GM12878 (cell line): ENCODE measurements at regions of chr18 and their contacts with region 1.

Region 1: GRCh38 chr18:76169733-76170132 is 325.3 kb downstream of the ZNF516 start:
- DNase-seq: no peak
- ATAC-seq: peak; percentile 56
- H3K4me3 ChIP-seq: no peak overlapping the region
- H3K27ac ChIP-seq: no peak overlapping the region
- H3K4me1 ChIP-seq: no peaks in the 10 kb centered on the region
- H3K27me3 ChIP-seq: no peaks in the 10 kb centered on the region; a peak in 1 of 4 replicates
- CTCF ChIP-seq: peak; percentile 40 to 58 (median 58)
- EP300 ChIP-seq: no peak
- POLR2A ChIP-seq: no peak
- RAD21 ChIP-seq: 0 out of 2 replicates have a peak, but pooled peaks have one; percentile 18

Region 2: DNA sequence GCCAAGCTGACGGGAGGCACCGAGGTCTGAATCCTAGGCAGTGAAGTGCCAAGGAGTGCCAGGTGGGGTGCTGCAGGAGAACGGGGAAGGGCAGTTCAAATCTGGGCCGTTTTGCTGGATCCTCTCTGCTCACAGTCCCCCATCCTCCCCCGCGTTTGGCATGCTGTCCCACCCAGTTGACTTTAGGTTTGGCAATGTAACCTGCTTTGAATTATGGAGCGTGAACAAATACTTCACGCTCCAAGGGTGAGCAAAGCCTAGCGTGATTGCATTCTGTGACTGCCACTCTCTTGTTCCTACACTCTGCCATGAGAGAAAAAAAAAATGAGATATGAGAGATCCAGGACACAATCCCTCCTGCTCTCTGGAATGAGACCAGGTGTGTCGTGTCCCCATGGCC is 56.6 kb before region 1 on chr18:
- CTCF ChIA-PET with region 1: no interaction called
- POLR2A ChIA-PET with region 1: no interaction called
- RAD21 ChIA-PET with region 1: no interaction called
- SMC1A ChIA-PET with region 1: no interaction called
- in situ Hi-C with region 1: no loop called
- intact Hi-C with region 1: no loop called
- DNase-seq: no peak
- ATAC-seq: no peak
- H3K4me3 ChIP-seq: no peak overlapping the region
- H3K27ac ChIP-seq: no peak overlapping the region
- H3K4me1 ChIP-seq: no peaks in the 10 kb centered on the region
- H3K27me3 ChIP-seq: no peaks in the 10 kb centered on the region; a peak in 1 of 4 replicates
- CTCF ChIP-seq: no peak
- EP300 ChIP-seq: no peak
- POLR2A ChIP-seq: no peak
- RAD21 ChIP-seq: no peak

Region 3: DNA sequence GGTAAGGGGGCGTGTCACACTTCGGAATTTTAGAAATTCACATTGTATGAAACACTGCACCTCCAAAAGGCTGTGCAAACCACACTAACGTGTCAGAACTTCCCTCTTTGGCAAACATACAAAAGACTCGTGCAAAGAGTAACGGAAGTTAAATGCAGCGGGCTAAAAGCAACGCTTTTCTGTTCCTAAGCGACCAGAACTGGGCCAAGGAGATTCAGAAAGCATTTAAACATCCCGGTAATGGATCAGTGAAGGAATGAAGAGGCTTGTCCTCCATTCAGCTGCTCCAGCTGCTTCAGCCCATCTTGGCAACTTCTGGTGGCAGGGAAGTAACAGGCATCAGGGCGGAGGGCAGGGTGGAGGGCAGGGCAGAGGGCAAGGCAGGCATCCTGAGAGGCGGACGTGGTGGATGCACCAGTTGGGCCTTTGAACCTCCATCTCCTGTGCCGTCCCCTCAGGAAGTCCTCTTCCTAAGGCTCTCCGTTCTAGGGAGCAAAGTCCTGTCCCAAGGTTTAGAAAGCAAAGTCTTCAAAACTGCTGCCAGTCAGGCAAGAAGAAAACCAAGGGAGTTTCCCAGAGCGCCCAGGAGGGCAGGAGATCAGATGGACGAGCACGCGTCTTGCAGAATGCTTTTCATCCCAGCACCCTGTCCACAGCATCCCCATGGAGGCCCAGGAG is 94.6 kb after region 1 on chr18:
- CTCF ChIA-PET with region 1: interaction called, 3 read pairs
- POLR2A ChIA-PET with region 1: no interaction called
- RAD21 ChIA-PET with region 1: no interaction called
- SMC1A ChIA-PET with region 1: no interaction called
- in situ Hi-C with region 1: no loop called
- intact Hi-C with region 1: loop called (anchors 5 kb)
- DNase-seq: no peak
- ATAC-seq: no peak
- H3K4me3 ChIP-seq: no peak overlapping the region
- H3K27ac ChIP-seq: no peak overlapping the region
- H3K4me1 ChIP-seq: no peaks in the 10 kb centered on the region
- H3K27me3 ChIP-seq: peaks cover 2 to 6% of the 10 kb centered on the region in 2 experiments; a peak in 2 of 4 replicates
- CTCF ChIP-seq: no peak
- EP300 ChIP-seq: no peak
- POLR2A ChIP-seq: no peak
- RAD21 ChIP-seq: no peak

Region 4: DNA sequence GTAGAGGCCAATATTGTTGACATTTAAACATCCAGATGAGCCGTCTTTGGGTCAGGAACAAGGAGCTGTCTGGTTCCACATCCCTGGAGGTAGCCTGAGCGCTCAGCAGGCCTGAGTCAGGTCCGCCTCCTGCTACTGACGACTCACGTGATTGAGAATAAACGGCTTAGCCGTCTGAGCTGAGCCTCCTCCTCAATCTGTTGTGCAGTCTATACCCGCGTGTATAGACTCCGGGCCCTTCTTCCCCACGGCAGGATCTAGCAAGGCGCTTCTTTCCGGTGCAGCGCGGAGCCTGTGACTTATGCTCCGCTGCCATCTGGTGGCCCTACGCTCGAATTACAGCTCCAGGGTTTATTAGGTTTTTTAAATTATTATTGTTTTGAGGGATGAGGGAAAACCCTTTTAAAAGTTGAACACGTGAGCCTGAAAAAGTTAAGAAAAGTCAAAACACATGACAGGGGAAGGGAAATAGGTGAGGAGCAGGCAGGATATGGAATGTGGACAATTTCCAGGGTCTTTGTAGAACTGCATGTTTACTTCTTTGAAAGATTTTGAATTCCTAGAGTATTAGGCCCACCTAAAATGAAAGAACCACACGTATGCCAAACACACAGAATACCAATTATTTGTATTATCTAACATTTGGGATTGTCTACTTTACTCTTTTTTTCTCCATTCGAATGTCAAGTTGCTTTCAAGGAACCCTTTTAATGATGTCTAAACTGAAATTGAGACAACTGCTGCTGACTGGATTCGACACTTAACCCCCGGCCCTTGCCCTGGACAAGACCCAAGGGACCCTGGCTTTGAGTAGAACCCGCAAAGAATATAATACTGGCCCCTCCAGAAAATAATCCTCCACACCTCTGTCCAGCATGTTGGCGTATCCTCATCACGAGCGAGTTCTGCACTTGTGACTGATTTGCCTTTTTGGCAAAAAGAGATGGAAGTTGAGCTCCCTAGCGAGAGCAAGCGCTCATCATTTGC is 540.2 kb after region 1 on chr18:
- CTCF ChIA-PET with region 1: interaction called, 15 read pairs
- POLR2A ChIA-PET with region 1: no interaction called
- RAD21 ChIA-PET with region 1: no interaction called
- SMC1A ChIA-PET with region 1: interaction called, 4 read pairs
- in situ Hi-C with region 1: no loop called
- intact Hi-C with region 1: no loop called
- DNase-seq: peak; percentile 12
- ATAC-seq: peak; percentile 93
- H3K4me3 ChIP-seq: no peak overlapping the region
- H3K27ac ChIP-seq: no peak overlapping the region
- H3K4me1 ChIP-seq: no peaks in the 10 kb centered on the region
- H3K27me3 ChIP-seq: no peaks in the 10 kb centered on the region
- CTCF ChIP-seq: peak; percentile 81 to 94 (median 87)
- EP300 ChIP-seq: no peak
- POLR2A ChIP-seq: no peak
- RAD21 ChIP-seq: peak; percentile 97